Activated CD4-positive, alpha-beta memory T cell treated with anti-CD3 and anti-CD28 coated beads, Interleukin-2, amount 10 ng/mL, durations not matched to agents 7 days and 5 days (primary cell): ENCODE measurements at regions of chr5 and their contacts with region 1.

Region 1: GRCh38 chr5:55062039-55062779 is 38.2 kb downstream of the GZMK start:
- DNase-seq: peak; percentile 88
- H3K4me3 Mint-ChIP-seq: peak overlapping the region; percentile 73
- H3K27ac Mint-ChIP-seq: peak overlapping the region; percentile 99
- H3K4me1 Mint-ChIP-seq: peaks cover 71% of the 10 kb centered on the region
- H3K27me3 Mint-ChIP-seq: no peaks in the 10 kb centered on the region

Region 2: DNA sequence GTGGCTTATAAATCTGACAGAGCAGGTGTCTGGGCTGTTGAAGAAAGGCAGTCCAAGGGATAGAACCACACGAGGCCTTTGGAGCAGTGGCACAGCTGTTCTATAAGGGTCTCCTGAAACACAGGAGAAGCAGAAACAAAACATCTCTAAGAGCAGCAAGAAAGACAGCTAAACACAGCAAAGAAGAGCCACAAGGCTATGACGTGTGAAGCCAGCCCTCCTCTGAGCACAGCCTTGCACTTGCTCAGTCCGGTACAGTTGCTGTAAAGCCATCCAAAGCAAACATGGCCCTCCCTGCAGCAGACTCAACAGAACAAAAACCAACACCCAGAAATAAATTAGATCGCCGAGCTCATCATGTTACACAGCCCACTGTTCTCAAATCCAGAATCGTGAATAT is 40.8 kb before region 1 on chr5:
- CTCF ChIA-PET with region 1: interaction called, 9 read pairs
- POLR2A ChIA-PET with region 1: interaction called, 13 read pairs
- DNase-seq: no peak
- H3K4me3 Mint-ChIP-seq: no peak overlapping the region
- H3K27ac Mint-ChIP-seq: no peak overlapping the region
- H3K4me1 Mint-ChIP-seq: peaks cover 49% of the 10 kb centered on the region
- H3K27me3 Mint-ChIP-seq: no peaks in the 10 kb centered on the region

Region 3: GRCh38 chr5:55027595-55027994 is 34.6 kb before region 1 on chr5:
- CTCF ChIA-PET with region 1: interaction called, 9 read pairs
- POLR2A ChIA-PET with region 1: interaction called, 15 read pairs
- DNase-seq: peak; percentile 64
- H3K4me3 Mint-ChIP-seq: peak overlapping the region; percentile 42
- H3K27ac Mint-ChIP-seq: peak overlapping the region; percentile 91
- H3K4me1 Mint-ChIP-seq: peaks cover 76% of the 10 kb centered on the region
- H3K27me3 Mint-ChIP-seq: no peaks in the 10 kb centered on the region

Region 4: GRCh38 chr5:55072666-55073065 is 10.5 kb after region 1 on chr5:
- CTCF ChIA-PET with region 1: interaction called, 11 read pairs
- POLR2A ChIA-PET with region 1: interaction called, 64 read pairs
- DNase-seq: no peak
- H3K4me3 Mint-ChIP-seq: peak overlapping the region; percentile 6
- H3K27ac Mint-ChIP-seq: peak overlapping the region; percentile 91
- H3K4me1 Mint-ChIP-seq: peaks cover 48% of the 10 kb centered on the region
- H3K27me3 Mint-ChIP-seq: no peaks in the 10 kb centered on the region

Region 5: GRCh38 chr5:55096861-55097260 is 34.7 kb after region 1 on chr5:
- CTCF ChIA-PET with region 1: interaction called, 7 read pairs
- POLR2A ChIA-PET with region 1: interaction called, 70 read pairs
- DNase-seq: peak; percentile 76
- H3K4me3 Mint-ChIP-seq: peak overlapping the region; percentile 38
- H3K27ac Mint-ChIP-seq: peak overlapping the region; percentile 92
- H3K4me1 Mint-ChIP-seq: peaks cover 84% of the 10 kb centered on the region
- H3K27me3 Mint-ChIP-seq: peaks cover 2% of the 10 kb centered on the region

Region 6: DNA sequence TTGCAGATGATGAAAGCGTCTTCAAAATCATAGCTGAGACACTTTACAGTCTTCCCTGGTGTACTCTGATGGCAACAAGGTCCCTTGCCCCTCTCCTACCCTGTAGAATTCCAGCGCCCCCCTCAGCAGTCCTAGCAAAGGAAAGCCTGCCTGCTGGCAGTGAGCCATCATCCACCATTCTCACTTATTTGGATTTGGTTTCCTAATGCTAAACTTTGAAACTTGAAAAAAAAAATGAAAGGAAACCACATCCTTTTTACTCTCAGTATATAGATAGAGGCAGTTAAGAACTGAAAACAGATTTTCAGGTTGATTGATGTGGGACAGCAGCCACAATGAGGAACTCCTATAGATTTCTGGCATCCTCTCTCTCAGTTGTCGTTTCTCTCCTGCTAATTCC is 40.1 kb after region 1 on chr5 and contains the start of gene GZMA:
- CTCF ChIA-PET with region 1: interaction called, 7 read pairs
- POLR2A ChIA-PET with region 1: interaction called, 70 read pairs
- DNase-seq: peak; percentile 47
- H3K4me3 Mint-ChIP-seq: peak within 1 kb of the TSS; percentile 83
- H3K27ac Mint-ChIP-seq: peak within 1 kb of the TSS; percentile 93
- H3K4me1 Mint-ChIP-seq: peaks cover 81% of the 10 kb centered on the region
- H3K27me3 Mint-ChIP-seq: peaks cover 5% of the 10 kb centered on the region
- total RNA-seq, gene GZMA: 1,058 to 1,099 TPM

Region 7: GRCh38 chr5:55146543-55147151 is 84.4 kb after region 1 on chr5:
- CTCF ChIA-PET with region 1: interaction called, 10 read pairs
- POLR2A ChIA-PET with region 1: interaction called, 10 read pairs
- DNase-seq: peak; percentile 89
- H3K4me3 Mint-ChIP-seq: no peak overlapping the region
- H3K27ac Mint-ChIP-seq: peak overlapping the region; percentile 3
- H3K4me1 Mint-ChIP-seq: peaks cover 31% of the 10 kb centered on the region
- H3K27me3 Mint-ChIP-seq: peaks cover 21% of the 10 kb centered on the region